ENCODE measurements at regions of chr3 and their contacts with region 1.

Region 1: DNA sequence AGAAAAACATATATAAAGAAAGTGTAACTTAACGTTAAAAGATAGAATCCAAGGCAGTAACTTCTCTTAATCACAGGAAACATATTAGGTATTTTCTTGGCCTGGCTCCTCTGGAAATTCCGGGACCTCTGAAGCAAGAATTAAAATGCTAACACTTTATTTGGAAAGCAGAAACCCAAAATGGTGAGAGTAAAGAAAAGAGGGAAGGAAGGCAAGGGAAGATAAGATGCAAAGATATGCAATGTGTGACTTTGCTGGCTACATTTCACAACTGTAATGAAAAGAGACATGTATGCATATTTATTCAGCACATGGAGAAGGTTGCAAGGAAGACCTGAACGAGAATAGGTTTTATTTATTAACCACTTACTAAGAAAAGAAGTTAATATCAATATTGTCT is 372.5 kb downstream of the TBL1XR1 start:
- DNase-seq: no peak
- H3K4me3 ChIP-seq: no peak overlapping the region
- H3K27ac ChIP-seq: no peak overlapping the region
- H3K4me1 ChIP-seq: no peaks in the 10 kb centered on the region
- H3K27me3 ChIP-seq: no peaks in the 10 kb centered on the region
- CTCF ChIP-seq: no peak

Region 2: DNA sequence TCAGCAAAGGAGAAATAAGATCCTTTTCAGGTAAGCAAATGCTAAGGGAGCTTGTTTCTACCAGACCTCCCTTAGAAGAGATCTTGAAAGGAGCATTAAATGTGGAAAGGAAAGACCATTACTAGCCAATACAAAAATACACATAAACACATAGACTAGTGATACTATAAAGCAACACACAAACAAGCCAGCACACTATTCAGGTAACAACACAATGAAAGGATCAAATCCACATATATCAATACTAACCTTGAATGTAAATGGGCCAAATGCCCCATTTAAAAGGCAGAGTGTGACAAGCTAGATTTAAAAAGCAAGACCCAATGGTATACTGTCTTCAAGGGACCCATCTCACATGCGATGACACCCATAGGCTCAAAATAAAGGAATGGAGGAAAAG is 54.9 kb after region 1 on chr3:
- CTCF ChIA-PET with region 1: no interaction called
- dilution Hi-C with region 1: loop called (anchors 5 kb)
- in situ Hi-C with region 1: no loop called
- intact Hi-C with region 1: no loop called
- DNase-seq: no peak
- H3K4me3 ChIP-seq: no peak overlapping the region
- H3K27ac ChIP-seq: no peak overlapping the region
- H3K4me1 ChIP-seq: no peaks in the 10 kb centered on the region
- H3K27me3 ChIP-seq: no peaks in the 10 kb centered on the region
- CTCF ChIP-seq: no peak